CD8-positive, alpha-beta T cell (primary cell): ENCODE measurements at regions of chr11 and their contacts with region 1.

Region 1: DNA sequence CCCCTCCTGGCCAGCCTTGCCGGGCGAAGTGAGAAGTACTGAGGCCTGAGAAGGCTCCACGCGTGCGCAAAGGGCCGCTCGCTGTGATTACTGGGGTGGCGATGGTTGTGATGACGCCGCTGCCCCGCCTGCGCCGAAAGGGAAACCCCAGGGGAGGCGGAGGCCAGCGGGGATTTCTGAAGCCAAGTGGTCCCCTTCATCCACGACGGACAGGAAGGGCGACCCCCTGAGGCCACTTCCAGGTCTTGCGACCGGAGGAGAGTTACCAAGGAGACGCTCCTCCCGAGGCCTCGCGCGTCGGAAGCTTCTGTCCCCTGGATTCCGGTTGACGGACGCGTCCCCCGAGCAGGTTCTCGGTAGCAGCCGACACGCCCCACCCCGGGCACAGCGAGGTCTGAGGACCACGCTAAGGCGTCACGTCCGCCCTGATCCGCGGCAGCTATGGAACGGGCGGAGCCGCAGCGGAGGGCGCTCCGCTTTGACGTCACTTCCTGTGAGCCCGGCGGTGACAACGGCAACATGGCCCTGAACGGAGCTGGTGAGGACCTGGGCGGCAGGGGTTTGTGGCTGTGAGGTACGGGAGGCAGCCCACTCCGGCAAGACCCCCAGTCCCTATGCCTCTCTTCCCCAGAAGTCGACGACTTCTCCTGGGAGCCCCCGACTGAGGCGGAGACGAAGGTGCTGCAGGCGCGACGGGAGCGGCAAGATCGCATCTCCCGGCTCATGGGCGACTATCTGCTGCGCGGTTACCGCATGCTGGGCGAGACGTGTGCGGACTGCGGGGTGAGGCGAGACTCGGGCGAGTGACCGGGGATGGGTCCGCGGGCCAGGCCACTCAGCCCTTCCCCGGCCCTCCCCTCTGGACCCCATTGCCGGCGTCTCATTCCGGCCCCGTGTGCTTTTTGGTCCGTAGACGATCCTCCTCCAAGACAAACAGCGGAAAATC is at the start of gene ZNRD2:
- DNase-seq: peak; percentile 96 to 99 (median 98)
- ATAC-seq: peak; percentile 69
- H3K4me3 ChIP-seq: peak within 1 kb of the TSS; percentile 92 to 94
- H3K4me3 Mint-ChIP-seq: peak within 1 kb of the TSS; percentile 99
- H3K27ac ChIP-seq: peak within 1 kb of the TSS; percentile 94 to 99
- H3K27ac Mint-ChIP-seq: peak within 1 kb of the TSS; percentile 99
- H3K4me1 ChIP-seq: peaks cover 76% of the 10 kb centered on the region
- H3K4me1 Mint-ChIP-seq: peaks cover 76% of the 10 kb centered on the region
- H3K27me3 ChIP-seq: no peaks in the 10 kb centered on the region
- H3K27me3 Mint-ChIP-seq: no peaks in the 10 kb centered on the region
- CTCF ChIP-seq: no peak
- total RNA-seq, gene ZNRD2: 35.6 to 41.4 TPM

Region 2: GRCh38 chr11:64659417-64660144 is 910.7 kb before region 1 on chr11:
- CTCF ChIA-PET with region 1: no interaction called
- POLR2A ChIA-PET with region 1: no interaction called
- intact Hi-C with region 1: no loop called
- DNase-seq: no peak
- ATAC-seq: no peak
- H3K4me3 ChIP-seq: no peak overlapping the region
- H3K4me3 Mint-ChIP-seq: no peak overlapping the region
- H3K27ac ChIP-seq: no peak overlapping the region
- H3K27ac Mint-ChIP-seq: no peak overlapping the region
- H3K4me1 ChIP-seq: no peaks in the 10 kb centered on the region
- H3K4me1 Mint-ChIP-seq: no peaks in the 10 kb centered on the region
- H3K27me3 ChIP-seq: no peaks in the 10 kb centered on the region
- H3K27me3 Mint-ChIP-seq: no peaks in the 10 kb centered on the region
- CTCF ChIP-seq: no peak

Region 3: GRCh38 chr11:65027213-65028067 is 542.8 kb before region 1 on chr11 and contains the start of gene SNX15:
- CTCF ChIA-PET with region 1: no interaction called
- POLR2A ChIA-PET with region 1: no interaction called
- intact Hi-C with region 1: loop called in 1 of 2 experiments (anchors 5 kb)
- DNase-seq: peak; percentile 77 to 96 (median 90)
- ATAC-seq: peak; percentile 96
- H3K4me3 ChIP-seq: peak within 1 kb of the TSS; percentile 34 to 54
- H3K4me3 Mint-ChIP-seq: peak within 1 kb of the TSS; percentile 69
- H3K27ac ChIP-seq: peak within 1 kb of the TSS; percentile 41 to 71
- H3K27ac Mint-ChIP-seq: peak within 1 kb of the TSS; percentile 80
- H3K4me1 ChIP-seq: peaks cover 19% of the 10 kb centered on the region
- H3K4me1 Mint-ChIP-seq: peaks cover 18% of the 10 kb centered on the region
- H3K27me3 ChIP-seq: no peaks in the 10 kb centered on the region
- H3K27me3 Mint-ChIP-seq: no peaks in the 10 kb centered on the region
- CTCF ChIP-seq: peak; percentile 80
- total RNA-seq, gene SNX15: 10.4 to 14.0 TPM

Region 4: DNA sequence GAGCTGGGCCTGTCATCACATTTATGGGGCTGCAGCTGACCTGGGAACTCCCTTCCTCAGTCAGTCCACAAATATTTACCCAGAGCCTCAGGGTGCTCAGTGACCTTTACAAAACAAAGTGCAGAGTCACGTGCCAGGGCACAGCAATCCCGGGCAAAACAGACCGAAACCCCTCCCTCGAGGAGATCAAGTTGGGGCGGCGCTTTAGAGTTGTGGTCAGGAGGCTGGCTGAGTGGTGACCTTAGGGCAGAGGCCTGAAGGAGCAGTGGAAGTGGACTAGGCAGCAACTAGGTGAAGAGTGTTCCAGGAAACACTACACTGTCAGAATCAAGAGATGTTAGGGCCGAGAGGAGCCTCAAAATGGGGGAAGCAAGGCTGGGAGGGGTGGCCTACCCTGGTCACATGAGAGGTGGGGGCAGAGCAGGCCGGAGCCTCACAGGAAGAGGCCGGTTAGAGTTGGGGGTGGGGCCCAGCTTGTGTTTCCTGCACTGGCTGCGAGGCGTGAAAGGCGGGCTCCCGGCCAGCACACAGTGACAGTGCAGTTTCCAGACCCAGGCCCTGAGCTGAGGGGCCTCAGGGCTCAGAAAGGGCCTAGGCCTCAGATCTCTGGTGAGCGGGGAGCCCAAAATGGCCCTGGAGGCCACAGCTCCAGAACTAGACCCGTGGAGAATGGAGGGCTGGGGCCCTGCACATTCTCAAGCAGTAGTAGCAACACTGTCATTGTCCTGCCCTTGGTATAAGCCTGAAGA is 151.4 kb before region 1 on chr11:
- CTCF ChIA-PET with region 1: no interaction called
- POLR2A ChIA-PET with region 1: interaction called, 6 read pairs
- intact Hi-C with region 1: loop called in 1 of 2 experiments (anchors 5 kb)
- DNase-seq: peak in 8 of 9 experiments; percentile 71 to 90 (median 82)
- ATAC-seq: peak; percentile 4
- H3K4me3 ChIP-seq: peak overlapping the region; percentile 76 to 95
- H3K4me3 Mint-ChIP-seq: peak overlapping the region; percentile 94
- H3K27ac ChIP-seq: peak overlapping the region; percentile 99 to 100
- H3K27ac Mint-ChIP-seq: peak overlapping the region; percentile 98
- H3K4me1 ChIP-seq: peaks cover 58% of the 10 kb centered on the region
- H3K4me1 Mint-ChIP-seq: peaks cover 55% of the 10 kb centered on the region
- H3K27me3 ChIP-seq: no peaks in the 10 kb centered on the region
- H3K27me3 Mint-ChIP-seq: no peaks in the 10 kb centered on the region
- CTCF ChIP-seq: no peak

Region 5: DNA sequence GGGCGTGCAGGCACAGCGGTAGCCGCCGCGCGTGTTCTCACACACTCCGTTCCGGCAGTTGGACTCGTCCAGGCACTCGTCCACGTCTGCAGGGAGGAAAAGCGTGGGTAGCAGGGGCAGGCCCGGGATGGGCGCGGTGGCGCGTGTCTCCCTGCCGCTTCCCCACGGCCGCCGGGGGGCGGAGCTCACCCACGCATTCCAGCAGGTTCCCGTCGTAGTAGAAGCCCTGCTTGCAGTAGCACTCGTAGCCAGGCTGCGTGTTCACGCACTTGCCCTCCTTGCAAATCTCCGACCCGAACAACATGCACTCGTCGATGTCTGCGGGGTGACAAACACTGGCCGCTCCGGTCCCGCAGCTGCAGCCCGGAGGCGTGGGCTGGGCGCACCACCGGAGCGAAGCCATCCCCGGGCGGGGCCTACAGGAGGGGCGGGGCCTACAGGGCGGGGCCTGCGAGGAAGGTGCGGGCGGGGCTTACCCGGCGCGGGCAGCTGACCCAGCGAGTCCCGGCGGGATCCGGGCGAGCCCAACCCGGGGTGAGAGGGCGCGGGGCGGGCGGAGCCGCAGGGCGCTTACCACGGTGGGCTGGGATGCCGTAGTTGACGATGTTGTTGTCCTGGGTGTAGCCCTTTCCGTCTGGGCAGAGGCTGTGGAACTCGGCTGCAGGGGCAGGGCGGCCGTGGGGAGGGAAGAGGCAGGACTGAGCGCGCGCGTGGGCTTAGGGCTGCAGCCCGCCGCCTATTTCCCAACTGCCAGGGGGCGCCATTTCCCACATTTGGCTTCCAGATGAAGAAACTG is 29.8 kb before region 1 on chr11:
- CTCF ChIA-PET with region 1: interaction called, 89 read pairs
- POLR2A ChIA-PET with region 1: interaction called, 50 read pairs
- intact Hi-C with region 1: loop called (anchors 1 kb)
- DNase-seq: peak; percentile 78 to 93 (median 88)
- ATAC-seq: peak; percentile 85
- H3K4me3 ChIP-seq: peak overlapping the region; percentile 77 to 80
- H3K4me3 Mint-ChIP-seq: peak overlapping the region; percentile 86
- H3K27ac ChIP-seq: peak overlapping the region; percentile 53 to 60
- H3K27ac Mint-ChIP-seq: peak overlapping the region; percentile 71
- H3K4me1 ChIP-seq: peaks cover 15% of the 10 kb centered on the region
- H3K4me1 Mint-ChIP-seq: peaks cover 19% of the 10 kb centered on the region
- H3K27me3 ChIP-seq: no peaks in the 10 kb centered on the region
- H3K27me3 Mint-ChIP-seq: no peaks in the 10 kb centered on the region
- CTCF ChIP-seq: peak; percentile 62

Region 6: GRCh38 chr11:65558002-65558931 is 12.0 kb before region 1 on chr11 and contains the start of gene LTBP3:
- CTCF ChIA-PET with region 1: interaction called, 47 read pairs
- POLR2A ChIA-PET with region 1: interaction called, 38 read pairs
- intact Hi-C with region 1: loop called (anchors 1 kb)
- DNase-seq: peak in 5 of 9 experiments; percentile 29 to 70 (median 66)
- ATAC-seq: peak; percentile 38
- H3K4me3 ChIP-seq: peak within 1 kb of the TSS; percentile 54 to 61
- H3K4me3 Mint-ChIP-seq: peak within 1 kb of the TSS; percentile 89
- H3K27ac ChIP-seq: peak within 1 kb of the TSS; percentile 60 to 79
- H3K27ac Mint-ChIP-seq: peak within 1 kb of the TSS; percentile 89
- H3K4me1 ChIP-seq: peaks cover 61% of the 10 kb centered on the region
- H3K4me1 Mint-ChIP-seq: peaks cover 56% of the 10 kb centered on the region
- H3K27me3 ChIP-seq: no peaks in the 10 kb centered on the region
- H3K27me3 Mint-ChIP-seq: no peaks in the 10 kb centered on the region
- CTCF ChIP-seq: no peak
- total RNA-seq, gene LTBP3: 231 to 246 TPM

Region 7: DNA sequence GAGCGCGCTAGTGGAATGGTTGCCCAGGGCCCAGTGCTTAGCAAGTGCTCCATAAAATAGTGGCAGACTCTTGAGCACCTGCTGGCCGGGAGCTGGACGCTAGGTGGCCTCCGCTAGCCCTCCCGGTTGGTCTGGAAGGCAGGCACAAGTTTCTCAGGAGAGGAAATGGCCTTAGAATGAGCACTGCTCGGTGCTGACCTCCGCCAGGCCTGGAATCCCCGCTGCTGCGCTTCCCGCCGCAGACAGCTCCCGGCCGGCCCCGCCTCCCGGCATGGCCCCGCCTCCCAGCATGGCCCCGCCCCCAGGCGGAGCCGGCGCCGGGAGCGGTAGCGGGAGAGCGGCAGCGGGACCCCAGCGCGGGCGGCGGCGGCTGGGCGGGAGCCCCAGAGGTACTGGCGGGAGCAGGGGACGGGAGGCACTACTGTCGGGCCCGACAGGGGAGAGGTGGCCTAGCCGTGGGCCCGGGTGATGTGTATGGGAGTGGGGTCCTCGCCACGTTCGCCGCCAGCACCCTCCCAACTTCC is 67.6 kb after region 1 on chr11 and contains the start of gene SIPA1:
- CTCF ChIA-PET with region 1: interaction called, 3 read pairs
- POLR2A ChIA-PET with region 1: no interaction called
- intact Hi-C with region 1: loop called in 1 of 2 experiments (anchors 2 kb)
- DNase-seq: peak; percentile 46 to 89 (median 70)
- ATAC-seq: peak; percentile 43
- H3K4me3 ChIP-seq: peak within 1 kb of the TSS; percentile 99
- H3K4me3 Mint-ChIP-seq: peak within 1 kb of the TSS; percentile 94
- H3K27ac ChIP-seq: peak within 1 kb of the TSS; percentile 97 to 98
- H3K27ac Mint-ChIP-seq: peak within 1 kb of the TSS; percentile 98
- H3K4me1 ChIP-seq: peaks cover 62% of the 10 kb centered on the region
- H3K4me1 Mint-ChIP-seq: peaks cover 44% of the 10 kb centered on the region
- H3K27me3 ChIP-seq: no peaks in the 10 kb centered on the region
- H3K27me3 Mint-ChIP-seq: no peaks in the 10 kb centered on the region
- CTCF ChIP-seq: no peak
- total RNA-seq, gene SIPA1: 397 to 405 TPM

Region 8: DNA sequence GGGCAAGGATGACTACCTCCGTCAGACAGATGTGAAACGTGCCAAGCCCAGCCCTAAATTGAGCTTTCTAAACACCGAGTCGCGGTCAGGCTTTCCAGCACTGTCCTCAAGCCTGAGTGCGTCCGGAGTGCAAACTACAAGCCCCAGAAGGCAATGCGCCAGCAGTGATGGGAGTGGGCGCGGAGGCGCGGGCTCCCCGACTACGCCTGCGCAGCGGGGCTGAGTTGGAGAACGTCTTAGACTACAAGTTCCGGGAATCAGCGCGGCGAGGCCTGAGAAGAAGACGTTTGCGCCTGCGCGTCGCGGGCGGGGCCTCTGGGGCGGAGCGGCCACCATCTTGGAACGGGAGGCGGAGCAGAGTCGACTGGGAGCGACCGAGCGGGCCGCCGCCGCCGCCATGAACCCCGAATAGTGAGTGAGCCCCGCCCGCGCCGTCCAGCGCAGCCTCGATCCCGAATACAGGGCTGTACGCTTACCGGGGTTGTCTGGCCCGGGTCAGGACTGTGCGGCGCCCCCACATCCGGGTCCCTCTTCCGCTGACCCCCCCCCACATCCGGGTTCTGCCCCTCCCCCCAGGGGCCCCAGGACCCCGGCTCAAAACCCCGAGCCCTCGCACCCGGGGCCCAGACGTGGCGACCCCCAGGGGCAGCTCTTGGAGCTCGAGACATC is 698.2 kb after region 1 on chr11 and contains the start of gene RAB1B:
- CTCF ChIA-PET with region 1: no interaction called
- POLR2A ChIA-PET with region 1: no interaction called
- intact Hi-C with region 1: loop called in 1 of 2 experiments (anchors 1 kb)
- DNase-seq: peak; percentile 99 to 100 (median 100)
- ATAC-seq: peak; percentile 75
- H3K4me3 ChIP-seq: peak within 1 kb of the TSS; percentile 89 to 97
- H3K4me3 Mint-ChIP-seq: peak within 1 kb of the TSS; percentile 97
- H3K27ac ChIP-seq: peak within 1 kb of the TSS; percentile 83 to 91
- H3K27ac Mint-ChIP-seq: peak within 1 kb of the TSS; percentile 97
- H3K4me1 ChIP-seq: peaks cover 43% of the 10 kb centered on the region
- H3K4me1 Mint-ChIP-seq: peaks cover 50% of the 10 kb centered on the region
- H3K27me3 ChIP-seq: no peaks in the 10 kb centered on the region
- H3K27me3 Mint-ChIP-seq: no peaks in the 10 kb centered on the region
- CTCF ChIP-seq: no peak
- total RNA-seq, gene RAB1B: 34.4 to 36.3 TPM